A673 (cell line): ENCODE measurements at regions of chr2 and their contacts with region 1.

Region 1: DNA sequence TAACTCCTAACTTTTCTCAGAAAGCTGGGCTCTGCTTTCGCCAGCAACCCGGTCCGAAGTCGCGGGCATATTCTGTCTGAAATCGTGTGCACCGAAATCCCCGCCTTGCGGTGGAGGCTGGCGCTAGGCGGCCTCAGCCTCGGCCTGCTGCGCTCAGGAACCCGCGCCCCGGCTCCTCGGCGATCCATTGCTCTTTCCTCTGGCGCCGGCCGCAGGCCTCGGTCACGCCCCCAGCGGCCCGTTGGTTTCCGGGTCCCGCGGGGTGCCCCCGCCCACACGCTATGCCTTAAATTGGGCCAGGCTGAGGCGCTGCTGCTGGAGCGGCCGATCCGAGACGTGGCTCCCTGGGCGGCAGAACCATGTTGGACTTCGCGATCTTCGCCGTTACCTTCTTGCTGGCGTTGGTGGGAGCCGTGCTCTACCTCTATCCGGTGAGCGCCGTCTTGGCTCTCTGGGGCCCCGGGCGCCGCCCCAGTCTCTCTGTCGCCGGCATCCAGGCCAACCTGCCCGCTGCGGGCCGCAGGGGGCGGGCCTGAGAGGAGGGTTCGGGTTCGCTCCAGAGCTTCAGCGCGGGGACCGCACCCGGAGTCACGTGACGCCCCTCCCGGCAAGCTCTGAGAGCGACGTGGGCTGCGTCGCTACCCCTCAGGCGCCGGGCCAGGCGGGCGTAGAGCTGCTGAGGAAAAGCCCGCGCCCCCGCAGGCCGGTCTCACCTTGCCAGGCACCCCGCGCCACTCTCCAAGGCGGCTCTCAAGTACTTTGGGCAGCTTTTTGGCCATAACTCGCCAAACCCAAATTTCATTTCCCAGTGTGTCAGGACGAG is at the start of gene CYP20A1:
- DNase-seq: peak; percentile 97
- H3K4me3 ChIP-seq: peak within 1 kb of the TSS; percentile 78
- H3K27ac ChIP-seq: peak within 1 kb of the TSS; percentile 97
- H3K4me1 ChIP-seq: peaks cover 16% of the 10 kb centered on the region
- H3K27me3 ChIP-seq: no peaks in the 10 kb centered on the region
- CTCF ChIP-seq: no peak; the same call in 1 of the 2 replicates
- total RNA-seq, gene CYP20A1: 13.2 and 17.1 TPM in 2 replicates

Region 2: DNA sequence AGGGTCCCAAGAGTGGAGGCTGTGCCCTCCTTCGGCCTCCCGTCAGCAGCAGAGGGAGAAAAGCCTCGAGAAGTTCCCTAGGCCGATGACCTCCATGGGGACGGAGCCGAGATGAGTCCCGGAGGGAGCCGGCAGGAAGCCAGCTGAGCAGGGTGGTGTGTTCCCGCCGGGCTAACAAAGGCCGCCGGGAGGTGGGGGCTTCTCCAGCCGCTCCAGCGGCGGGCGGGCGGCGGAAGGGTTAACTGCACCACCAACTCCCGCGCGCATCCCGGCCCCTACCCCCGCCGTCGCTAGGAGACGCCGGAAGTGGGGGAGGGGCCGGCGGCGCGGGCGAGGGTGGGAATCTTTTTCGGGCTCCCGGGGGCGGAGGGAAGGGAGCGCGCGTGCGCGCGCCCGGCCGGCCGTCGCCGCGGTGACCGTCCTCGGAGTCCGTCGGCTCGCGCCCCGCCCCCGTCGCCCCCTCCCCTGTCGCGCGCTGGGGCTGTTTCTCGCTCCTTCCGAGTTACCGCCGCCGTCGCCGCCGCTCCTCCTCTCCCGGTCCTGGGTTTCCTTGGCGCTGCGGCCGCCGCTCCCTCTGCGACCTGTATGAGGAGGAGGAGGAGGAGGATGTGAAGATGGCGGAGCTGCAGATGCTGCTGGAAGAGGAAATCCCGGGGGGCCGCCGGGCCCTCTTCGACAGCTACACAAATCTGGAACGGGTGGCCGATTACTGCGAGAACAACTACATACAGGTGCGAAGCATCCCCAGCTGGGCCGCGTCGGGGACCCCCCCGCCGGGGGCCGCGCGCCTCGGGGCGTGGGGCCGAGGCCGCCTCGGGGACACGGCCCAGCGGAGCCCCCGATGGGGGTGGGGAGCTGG is 89.2 kb after region 1 on chr2 and contains the start of gene ABI2:
- CTCF ChIA-PET with region 1: no interaction called
- POLR2A ChIA-PET with region 1: no interaction called
- intact Hi-C with region 1: loop called (anchors 5 kb)
- DNase-seq: peak; percentile 97
- H3K4me3 ChIP-seq: peak within 1 kb of the TSS; percentile 92
- H3K27ac ChIP-seq: peak within 1 kb of the TSS; percentile 90
- H3K4me1 ChIP-seq: peaks cover 9% of the 10 kb centered on the region
- H3K27me3 ChIP-seq: no peaks in the 10 kb centered on the region
- CTCF ChIP-seq: no peak
- total RNA-seq, gene ABI2: 134 and 146 TPM in 2 replicates